GM13976 (cell line): ENCODE measurements at regions of chr7 and their contacts with region 1.

Region 1: DNA sequence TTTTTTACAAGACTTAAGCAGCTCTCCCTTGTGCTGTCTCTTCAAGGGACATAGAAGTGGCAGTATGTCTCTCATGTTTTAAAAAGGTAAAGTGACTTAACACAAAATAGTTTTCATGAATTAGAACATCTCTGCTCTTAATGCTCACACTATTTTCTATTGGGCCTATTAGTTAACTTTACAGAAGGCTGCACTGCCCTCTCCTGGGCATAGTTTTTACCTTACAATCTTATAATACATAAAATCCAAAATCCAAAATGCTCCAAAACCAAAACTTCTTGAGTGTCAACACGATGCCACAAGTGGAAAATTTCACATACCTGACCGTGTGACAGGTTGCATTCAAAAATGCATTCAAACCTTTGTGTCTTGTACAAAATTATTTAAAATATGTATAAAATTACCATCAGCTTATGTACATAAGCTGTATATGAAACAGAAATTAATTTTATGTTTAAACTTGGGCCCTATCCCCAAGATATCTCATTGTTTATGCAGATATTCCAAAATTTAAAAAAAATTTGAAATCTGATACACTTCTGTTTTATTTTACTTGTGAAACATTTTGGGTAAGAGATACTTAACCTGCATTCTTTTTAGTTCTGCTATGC is 25.8 kb downstream of the TES start:
- DNase-seq: peak; percentile 25
- CTCF ChIP-seq: no peak

Region 2: DNA sequence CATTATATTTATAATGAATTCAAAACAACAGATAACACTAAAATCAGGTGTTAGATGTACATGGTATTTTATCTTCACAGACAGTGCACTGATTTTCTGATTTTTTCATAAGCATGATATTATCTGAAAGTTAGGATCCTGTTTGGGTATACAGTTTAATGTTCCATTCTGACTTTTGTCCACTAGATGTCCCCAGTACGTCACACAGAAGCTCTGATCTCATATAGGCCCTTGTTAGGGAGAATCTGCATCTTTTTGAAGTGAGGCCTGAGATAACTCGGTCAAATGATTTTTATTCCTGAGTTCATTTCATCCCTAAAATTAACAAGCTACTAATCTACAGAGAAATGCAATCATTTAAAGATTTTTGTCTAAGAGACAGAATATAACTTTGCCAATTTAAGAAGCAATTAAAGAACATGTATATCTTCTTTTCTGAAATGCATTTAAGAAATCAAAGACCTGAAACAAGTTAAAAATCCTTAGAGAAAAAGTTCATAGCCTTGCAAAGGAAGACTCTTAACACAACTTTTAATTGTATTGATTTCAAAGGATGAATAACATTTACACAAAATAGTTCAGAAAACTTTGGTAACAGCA is 97.8 kb before region 1 on chr7:
- in situ Hi-C with region 1: loop called (anchors 25 kb)
- DNase-seq: peak; percentile 34
- CTCF ChIP-seq: peak; percentile 60

Region 3: DNA sequence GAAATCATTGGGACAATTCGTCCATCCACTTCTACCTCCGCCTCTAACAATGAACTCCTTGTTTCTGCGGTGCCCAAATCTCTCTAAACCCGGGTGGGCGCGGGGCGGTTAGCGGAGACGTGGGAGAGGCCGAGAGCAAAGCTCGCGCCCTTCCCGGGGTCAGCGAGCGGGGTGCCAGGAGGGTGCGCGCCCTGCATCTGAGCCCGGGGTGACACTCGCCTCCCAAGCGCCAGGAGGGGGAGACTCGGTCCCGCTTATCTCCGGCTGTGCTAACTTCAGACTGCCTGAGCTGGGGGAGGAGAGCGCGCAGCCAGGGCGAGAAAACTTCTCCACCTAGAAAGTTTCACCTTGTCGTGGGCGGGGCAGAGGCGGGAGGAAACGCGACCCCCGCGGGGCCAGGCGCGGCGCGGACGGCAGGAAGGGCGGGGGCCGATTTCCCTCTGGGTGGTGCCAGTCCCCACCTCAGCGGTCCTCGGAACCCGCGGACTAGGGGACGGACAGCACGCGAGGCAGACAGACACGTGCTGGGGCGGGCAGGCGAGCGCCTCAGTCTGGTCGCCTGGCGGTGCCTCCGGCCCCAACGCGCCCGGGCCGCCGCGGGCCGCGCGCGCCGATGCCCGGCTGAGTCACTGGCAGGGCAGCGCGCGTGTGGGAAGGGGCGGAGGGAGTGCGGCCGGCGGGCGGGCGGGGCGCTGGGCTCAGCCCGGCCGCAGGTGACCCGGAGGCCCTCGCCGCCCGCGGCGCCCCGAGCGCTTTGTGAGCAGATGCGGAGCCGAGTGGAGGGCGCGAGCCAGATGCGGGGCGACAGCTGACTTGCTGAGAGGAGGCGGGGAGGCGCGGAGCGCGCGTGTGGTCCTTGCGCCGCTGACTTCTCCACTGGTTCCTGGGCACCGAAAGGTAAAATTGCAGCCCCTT is 435.8 kb after region 1 on chr7 and contains the start of gene MET:
- in situ Hi-C with region 1: no loop called
- DNase-seq: peak; percentile 80
- CTCF ChIP-seq: peak; percentile 38